Left ventricle myocardium superior (tissue), 1 donor: ENCODE measurements at regions of chr11 and their contacts with region 1.

Region 1: DNA sequence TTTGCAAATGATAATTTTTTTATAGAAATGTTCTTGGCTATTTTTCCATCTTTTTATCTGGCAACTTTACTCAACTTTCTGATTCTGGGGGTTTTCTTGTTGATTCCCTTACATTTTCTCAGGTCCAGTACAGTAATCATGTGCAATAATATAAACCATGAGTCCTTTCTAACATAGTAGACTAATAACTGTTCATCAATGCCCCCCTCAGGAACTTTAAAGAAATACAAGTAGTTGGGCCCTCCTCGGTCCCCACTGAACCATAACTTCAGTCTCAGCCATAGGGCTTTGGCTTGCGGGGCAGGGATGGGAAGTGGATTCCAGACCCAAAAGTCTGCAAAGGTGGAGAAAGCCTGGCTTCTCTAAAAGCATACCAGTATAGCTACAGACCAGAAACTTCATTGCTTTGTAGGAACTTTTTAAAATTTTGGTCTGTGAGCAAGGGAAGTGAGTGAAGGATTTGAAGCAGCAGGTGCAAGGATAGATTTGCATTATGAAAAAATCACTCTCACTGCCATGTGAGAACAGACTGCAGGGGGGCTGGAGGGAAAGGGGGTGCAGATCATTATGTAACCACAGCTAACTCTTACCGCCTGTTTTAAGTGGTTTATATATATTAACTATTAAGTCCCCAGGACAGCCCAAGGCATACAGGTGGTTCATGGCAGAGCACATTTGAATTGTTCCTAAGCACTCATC is 10.4 kb upstream of the TUB start:
- DNase-seq: no peak
- ATAC-seq: peak; percentile 43

Region 2: DNA sequence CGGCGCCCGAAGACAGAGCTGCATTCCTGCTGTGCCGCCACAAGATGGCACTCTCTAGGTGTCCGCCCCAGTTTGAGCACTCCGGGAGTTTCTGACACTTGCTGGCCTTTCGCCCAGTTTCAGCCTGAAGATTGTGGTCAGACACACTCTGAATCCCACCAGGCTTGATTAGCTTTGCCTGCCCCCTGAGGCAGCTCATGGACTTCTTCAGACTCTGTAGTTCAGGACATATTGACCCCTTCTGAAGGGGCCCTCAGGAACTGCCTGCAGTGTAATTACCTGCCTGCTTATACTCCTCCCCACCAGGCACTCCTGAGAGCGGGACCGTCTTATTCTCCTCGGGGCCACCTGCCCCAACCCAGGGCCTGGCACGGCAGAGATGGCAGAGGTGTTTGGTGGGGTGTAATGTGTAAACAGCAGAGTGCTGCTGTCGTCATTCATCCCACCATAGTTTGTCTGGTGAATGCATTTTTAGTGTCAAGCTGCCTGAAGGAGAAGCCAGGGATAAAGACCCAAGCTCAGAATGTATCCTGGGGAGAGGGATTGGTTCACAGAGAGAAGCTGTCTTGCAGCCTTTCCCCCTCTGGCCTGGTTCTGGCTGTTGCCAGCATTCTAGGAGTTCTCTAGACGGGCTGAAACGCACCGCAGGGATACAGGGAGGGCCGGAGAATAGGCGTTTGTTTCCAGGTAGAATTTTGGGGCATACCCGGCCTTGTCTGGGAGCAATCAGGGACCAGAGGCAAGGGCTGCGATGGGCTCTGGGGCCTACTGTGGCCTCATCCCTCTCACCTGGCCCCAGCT is 37.1 kb before region 1 on chr11:
- intact Hi-C with region 1: loop called (anchors 5 kb)
- DNase-seq: peak; percentile 86
- ATAC-seq: peak; percentile 59